ENCODE measurements at regions of chr1 and their contacts with region 1.

Region 1: DNA sequence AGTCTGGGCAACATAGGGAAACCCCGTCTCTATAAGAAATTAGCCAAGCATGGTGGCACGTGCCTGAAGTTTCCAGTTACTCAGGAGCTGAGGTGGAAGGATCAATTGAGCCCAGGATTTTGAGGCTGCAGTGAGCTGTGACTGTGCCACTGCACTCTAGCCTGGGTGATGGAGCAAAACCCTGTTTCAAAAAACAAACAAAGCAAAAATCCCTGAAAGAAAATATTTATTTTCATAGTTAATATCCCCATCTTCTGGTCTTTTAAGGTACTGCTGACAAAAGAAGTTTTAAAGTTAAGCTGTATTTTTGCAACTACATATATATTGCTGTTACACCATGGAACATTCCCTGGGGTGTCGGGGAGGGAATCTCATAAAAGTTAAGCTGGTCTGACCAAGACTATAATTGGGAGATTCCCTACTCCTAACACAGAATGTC is 26.0 kb downstream of the VAMP4 start:
- DNase-seq: no peak
- H3K4me3 ChIP-seq: no peak overlapping the region
- H3K27ac ChIP-seq: no peak overlapping the region
- H3K4me1 ChIP-seq: no peaks in the 10 kb centered on the region
- H3K27me3 ChIP-seq: no peaks in the 10 kb centered on the region
- CTCF ChIP-seq: peak; percentile 8 to 25 (median 19)
- EP300 ChIP-seq: no peak
- POLR2A ChIP-seq: no peak

Region 2: GRCh38 chr1:171485375-171486047 is 230.3 kb before region 1 on chr1 and contains the start of gene PRRC2C:
- intact Hi-C with region 1: loop called in 1 of 4 experiments (anchors 10 kb)
- DNase-seq: peak; percentile 96 to 99 (median 98)
- H3K4me3 ChIP-seq: peak within 1 kb of the TSS; percentile 85
- H3K27ac ChIP-seq: peak within 1 kb of the TSS; percentile 98 to 99
- H3K4me1 ChIP-seq: no peaks in the 10 kb centered on the region
- H3K27me3 ChIP-seq: no peaks in the 10 kb centered on the region
- CTCF ChIP-seq: peak; percentile 11 to 92 (median 78)
- EP300 ChIP-seq: peak; percentile 18
- POLR2A ChIP-seq: peak; percentile 77
- total RNA-seq, gene PRRC2C: 51.6 to 136 (median 107) TPM

Region 3: DNA sequence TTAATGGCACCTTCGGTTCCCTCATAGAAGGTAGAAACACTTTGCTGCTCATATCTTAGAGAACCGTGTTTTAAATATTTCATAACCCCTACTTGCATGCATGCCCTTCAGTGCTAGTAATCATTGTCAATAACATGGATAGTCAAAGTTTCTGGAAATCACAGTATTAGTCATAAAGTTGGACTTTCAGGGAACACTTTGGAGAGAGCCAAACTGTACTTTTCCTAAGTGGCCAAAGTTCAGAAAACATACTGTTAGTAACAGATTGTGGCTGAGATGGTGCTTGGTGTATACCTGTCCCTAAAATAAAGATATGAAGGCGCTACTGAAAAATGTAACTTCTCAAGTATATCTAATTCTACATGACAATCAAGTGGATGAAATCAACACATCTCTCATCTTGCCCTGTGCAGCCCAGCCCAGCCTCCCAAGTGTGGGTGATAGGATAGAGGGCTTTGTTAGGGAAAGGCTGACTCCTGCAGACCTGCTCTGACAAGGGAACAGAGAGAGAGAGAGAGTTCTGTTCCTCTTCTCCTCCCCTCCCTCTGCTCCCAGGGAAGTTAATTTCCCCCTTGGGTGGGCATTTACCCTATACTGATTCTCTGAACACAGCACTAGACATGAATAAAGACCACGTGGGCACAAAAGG is 77.8 kb before region 1 on chr1:
- intact Hi-C with region 1: loop called in 2 of 4 experiments (anchors 2 to 10 kb)
- DNase-seq: no peak
- H3K4me3 ChIP-seq: no peak overlapping the region
- H3K27ac ChIP-seq: no peak overlapping the region
- H3K4me1 ChIP-seq: no peaks in the 10 kb centered on the region
- H3K27me3 ChIP-seq: no peaks in the 10 kb centered on the region
- CTCF ChIP-seq: no peak
- EP300 ChIP-seq: no peak
- POLR2A ChIP-seq: no peak

Region 4: GRCh38 chr1:171644805-171645483 is 70.9 kb before region 1 on chr1:
- intact Hi-C with region 1: loop called in 3 of 4 experiments (anchors 5 to 10 kb)
- DNase-seq: peak; percentile 69 to 86 (median 76)
- H3K4me3 ChIP-seq: no peak overlapping the region
- H3K27ac ChIP-seq: peak overlapping the region; percentile 28 to 54
- H3K4me1 ChIP-seq: peaks cover 8% of the 10 kb centered on the region
- H3K27me3 ChIP-seq: no peaks in the 10 kb centered on the region
- CTCF ChIP-seq: peak; percentile 46 to 77 (median 57)
- EP300 ChIP-seq: no peak
- POLR2A ChIP-seq: no peak

Region 5: GRCh38 chr1:171654942-171655745 is 60.7 kb before region 1 on chr1:
- intact Hi-C with region 1: loop called in 1 of 4 experiments (anchors 5 kb)
- DNase-seq: peak; percentile 63 to 87 (median 73)
- H3K4me3 ChIP-seq: peak overlapping the region; percentile 4
- H3K27ac ChIP-seq: peak overlapping the region; percentile 16 to 74
- H3K4me1 ChIP-seq: peaks cover 10% of the 10 kb centered on the region
- H3K27me3 ChIP-seq: no peaks in the 10 kb centered on the region
- CTCF ChIP-seq: no peak
- EP300 ChIP-seq: no peak
- POLR2A ChIP-seq: no peak